ENCODE measurements at regions of chr6 and their contacts with region 1.

Region 1: DNA sequence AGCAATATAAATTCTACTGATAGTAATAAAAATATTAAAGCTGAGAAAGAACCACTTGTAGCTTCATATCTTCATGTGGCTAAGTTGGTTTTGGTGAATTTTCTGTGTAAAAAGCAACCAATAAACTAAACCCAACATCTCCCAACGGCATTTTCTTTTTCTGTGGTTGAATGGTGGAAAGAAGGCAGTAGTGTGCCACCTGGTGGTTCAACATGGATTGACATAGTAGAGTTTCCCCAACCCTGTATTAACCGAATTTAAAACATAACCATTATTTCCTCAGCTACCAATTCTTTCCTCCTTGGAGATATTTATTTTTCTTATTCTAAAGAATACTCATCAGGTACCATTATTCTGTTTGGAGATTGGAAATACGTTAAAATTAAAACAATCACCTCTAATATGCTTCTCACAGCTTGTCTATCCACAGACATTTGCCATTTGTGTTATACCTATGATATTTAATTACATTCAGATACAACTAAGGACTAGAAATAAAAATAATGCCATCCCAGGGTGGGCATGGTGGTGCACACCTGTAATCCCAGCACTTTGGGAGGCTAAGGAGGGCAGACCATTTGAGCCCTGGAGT is 117.1 kb upstream of the EEF1E1 start:
- DNase-seq: no peak
- H3K4me3 ChIP-seq: no peak overlapping the region
- CTCF ChIP-seq: peak; percentile 66

Region 2: DNA sequence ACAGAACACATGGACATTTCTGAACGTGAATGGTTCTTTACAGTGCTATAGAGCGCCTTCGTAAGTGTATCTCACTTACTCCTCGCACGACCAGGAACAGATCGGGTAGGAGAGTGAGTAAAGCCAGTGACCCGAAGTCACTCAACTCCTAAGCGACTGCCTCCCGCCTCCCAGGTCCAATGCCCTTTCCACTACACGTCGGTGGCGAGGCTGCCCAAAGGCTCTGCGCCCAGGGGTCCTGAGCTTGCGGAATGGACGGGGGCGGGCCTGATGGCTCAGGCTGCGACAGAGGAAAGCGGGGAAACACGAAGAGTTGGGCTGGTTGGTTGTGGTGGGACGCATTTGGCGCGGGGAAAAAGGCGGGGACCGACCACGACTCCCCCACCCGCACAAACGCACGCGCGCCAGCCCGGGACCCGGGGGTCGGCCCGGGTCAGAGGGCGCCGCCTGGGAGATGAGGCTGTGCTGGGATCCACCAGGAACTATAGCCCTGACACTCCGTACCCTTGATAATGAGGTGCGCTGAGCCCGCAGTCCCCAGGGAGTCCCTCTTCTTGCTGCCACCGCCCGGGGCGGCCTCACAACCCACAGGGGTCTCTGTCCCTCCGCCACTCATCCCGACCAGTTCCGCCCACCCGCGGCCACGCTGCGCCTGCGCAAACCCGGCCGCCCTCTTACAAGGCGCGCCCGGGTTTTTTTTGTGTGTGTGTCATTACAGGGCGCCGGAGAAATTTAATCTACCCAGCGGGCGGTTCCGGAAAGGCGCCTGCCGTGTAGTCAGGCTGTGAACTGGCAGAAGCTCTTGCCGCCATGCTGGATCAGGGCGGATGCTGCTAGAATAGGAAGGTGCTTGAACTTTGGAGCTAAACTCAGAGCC is 155.4 kb before region 1 on chr6 and contains the start of gene BLOC1S5:
- CTCF ChIA-PET with region 1: interaction called, 14 read pairs
- POLR2A ChIA-PET with region 1: no interaction called
- DNase-seq: peak; percentile 79
- H3K4me3 ChIP-seq: peak within 1 kb of the TSS; percentile 93
- CTCF ChIP-seq: peak; percentile 8

Region 3: DNA sequence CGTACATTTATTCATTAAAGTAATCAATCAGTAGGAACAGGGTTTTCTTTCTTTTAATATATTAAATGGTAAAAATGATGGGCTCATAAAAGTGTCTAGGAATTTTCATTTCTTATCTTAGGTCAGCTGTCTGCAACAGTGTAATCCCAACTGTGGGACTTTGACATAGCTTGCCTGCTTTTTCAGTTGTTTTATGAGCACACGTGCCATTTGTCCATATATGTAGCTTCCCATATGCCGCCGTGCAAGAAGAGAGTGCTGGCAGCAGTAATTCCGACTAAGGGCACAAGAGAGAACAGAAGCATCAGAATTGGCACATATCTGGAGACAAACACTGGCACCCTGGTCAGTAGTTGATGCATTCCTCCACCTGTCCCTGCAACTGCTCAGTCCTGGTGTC is 96.2 kb before region 1 on chr6:
- CTCF ChIA-PET with region 1: interaction called, 768 read pairs
- POLR2A ChIA-PET with region 1: no interaction called
- DNase-seq: no peak
- H3K4me3 ChIP-seq: no peak overlapping the region
- CTCF ChIP-seq: no peak

Region 4: GRCh38 chr6:8143945-8144344 is 75.5 kb before region 1 on chr6:
- CTCF ChIA-PET with region 1: interaction called, 38 read pairs
- POLR2A ChIA-PET with region 1: no interaction called
- DNase-seq: no peak
- H3K4me3 ChIP-seq: no peak overlapping the region
- CTCF ChIP-seq: no peak

Region 5: DNA sequence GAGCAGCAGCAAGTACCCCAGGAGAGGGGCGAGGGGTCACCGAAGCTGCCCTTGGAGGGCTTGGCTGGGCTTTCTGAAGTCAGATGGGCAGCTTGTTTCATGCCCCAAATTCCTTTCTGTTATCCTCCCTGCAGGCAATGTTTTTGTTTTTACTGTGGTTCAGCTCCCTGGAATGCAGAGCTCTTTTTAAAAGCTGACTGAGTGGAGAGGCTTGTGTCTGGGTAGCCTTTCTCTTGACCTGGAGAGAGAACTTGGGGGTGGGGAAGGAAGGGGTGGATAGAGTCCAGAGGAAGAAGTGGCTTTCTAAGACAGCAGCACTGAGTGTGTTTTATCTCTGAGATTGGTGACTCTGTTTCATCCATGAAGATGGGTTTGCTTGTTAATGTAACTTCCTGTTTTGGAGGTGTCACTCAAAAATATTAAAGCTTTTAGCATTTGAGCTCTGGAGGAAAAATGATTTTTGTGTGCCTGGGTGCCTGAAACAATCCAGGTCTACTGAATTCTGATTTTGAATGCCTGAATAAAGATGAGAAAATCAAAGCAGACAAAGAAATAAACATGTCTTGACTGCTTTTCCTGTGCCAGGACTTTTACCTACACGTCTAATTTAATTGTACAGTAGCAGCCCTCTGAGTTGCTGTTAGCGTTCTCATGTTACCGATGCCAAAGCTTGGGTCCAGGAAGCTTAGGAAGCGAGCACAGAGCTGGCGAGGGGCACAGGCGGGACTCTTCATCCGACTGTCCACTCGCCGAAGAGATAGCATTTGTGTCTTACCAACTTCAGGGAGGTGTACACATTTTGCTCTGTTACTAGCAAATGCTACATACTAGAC is 38.9 kb before region 1 on chr6:
- CTCF ChIA-PET with region 1: interaction called, 17 read pairs
- POLR2A ChIA-PET with region 1: no interaction called
- DNase-seq: peak; percentile 67
- H3K4me3 ChIP-seq: no peak overlapping the region
- CTCF ChIP-seq: no peak

Region 6: GRCh38 chr6:8207200-8208191 is 12.0 kb before region 1 on chr6:
- CTCF ChIA-PET with region 1: interaction called, 57 read pairs
- POLR2A ChIA-PET with region 1: no interaction called
- DNase-seq: no peak
- H3K4me3 ChIP-seq: no peak overlapping the region
- CTCF ChIP-seq: no peak

Measured in AG04449 (cell line).